Heart right ventricle (tissue), 16 donors: ENCODE measurements at regions of chr2 and their contacts with region 1.

Region 1: GRCh38 chr2:227479865-227480475 is 8.0 kb downstream of the AGFG1 start:
- DNase-seq: no peak
- ATAC-seq: peak in 7 of 8 donors; percentile 38 to 77 (median 65)
- H3K4me3 ChIP-seq: no peak overlapping the region
- H3K27ac ChIP-seq: no peak overlapping the region
- H3K4me1 ChIP-seq: peaks cover 0 to 76% (median 47%) of the 10 kb centered on the region in 9 donors
- H3K27me3 ChIP-seq: no peaks in the 10 kb centered on the region
- CTCF ChIP-seq: peak in 8 of 9 donors; percentile 12 to 58 (median 40)

Region 2: GRCh38 chr2:227509824-227510619 is 30.1 kb after region 1 on chr2:
- intact Hi-C with region 1: loop called in 1 of 10 experiments (anchors 5 kb)
- DNase-seq: no peak
- ATAC-seq: no peak
- H3K4me3 ChIP-seq: no peak overlapping the region
- H3K27ac ChIP-seq: no peak overlapping the region
- H3K4me1 ChIP-seq: peaks cover 9 to 97% (median 79%) of the 10 kb centered on the region in 9 donors
- H3K27me3 ChIP-seq: no peaks in the 10 kb centered on the region
- CTCF ChIP-seq: no peak

Region 3: DNA sequence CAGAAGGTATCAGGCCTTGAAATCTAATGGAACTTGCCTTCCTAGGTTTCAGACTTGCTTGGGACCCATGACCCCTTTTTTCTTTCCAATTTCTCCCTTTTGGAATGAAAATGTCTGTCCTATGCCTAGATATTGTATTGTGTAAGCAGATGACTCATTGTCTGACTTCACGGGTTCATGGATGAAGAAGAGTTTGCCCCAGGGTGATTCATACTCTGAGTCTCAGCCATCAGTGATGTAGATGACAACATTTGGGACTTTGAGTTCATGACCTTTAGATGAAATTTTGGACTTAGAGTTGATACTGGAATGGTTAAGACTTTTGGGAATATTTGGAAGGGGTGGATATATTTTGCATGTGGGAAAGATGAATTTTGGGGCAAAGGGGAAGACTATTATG is 175.5 kb after region 1 on chr2:
- intact Hi-C with region 1: loop called in 3 of 10 experiments (anchors 5 to 10 kb)
- DNase-seq: no peak
- ATAC-seq: peak in 4 of 8 donors; percentile 24 to 93 (median 65)
- H3K4me3 ChIP-seq: no peak overlapping the region
- H3K27ac ChIP-seq: peak overlapping the region in 1 of 10 donors; percentile 71
- H3K4me1 ChIP-seq: peaks cover 0 to 27% (median 0%) of the 10 kb centered on the region in 9 donors
- H3K27me3 ChIP-seq: peaks cover 0 to 4% (median 0%) of the 10 kb centered on the region in 7 donors
- CTCF ChIP-seq: no peak